ENCODE measurements at regions of chr16 and their contacts with region 1.

Region 1: DNA sequence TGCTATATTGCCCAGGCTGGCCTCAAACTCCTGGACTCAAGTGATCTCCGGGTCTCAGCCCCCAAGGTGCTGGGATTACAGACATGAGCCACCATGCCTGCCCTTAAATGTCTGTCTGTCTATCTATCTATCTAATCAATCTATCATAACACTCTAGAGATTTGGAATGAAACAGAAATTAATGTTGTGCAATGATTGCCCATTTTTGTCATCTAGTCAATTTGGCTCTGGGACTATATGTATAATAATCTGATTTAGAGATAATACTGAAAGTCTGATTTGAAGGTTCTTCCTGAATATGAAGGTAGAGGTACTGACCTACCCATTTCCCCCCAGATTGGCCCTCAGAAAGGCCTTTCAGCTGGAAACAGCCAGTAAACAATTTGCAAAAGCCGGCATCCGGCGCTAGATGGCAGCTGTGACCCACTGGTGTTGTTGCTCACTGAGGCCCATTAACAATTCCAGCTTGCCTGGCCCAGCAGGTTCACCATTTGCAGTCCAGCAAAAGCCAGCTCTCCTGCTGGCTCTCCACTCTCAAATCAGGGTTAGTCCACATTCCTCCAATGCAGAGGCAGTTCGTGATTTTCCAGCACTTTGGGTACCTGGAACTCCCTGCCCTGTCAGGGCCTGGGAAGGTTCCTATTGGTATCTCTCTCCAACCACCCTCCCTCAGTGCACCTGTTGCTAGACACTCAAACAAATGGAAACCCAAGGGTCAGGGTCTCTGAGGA is 22.9 kb upstream of the C16orf87 start:
- DNase-seq: peak; percentile 62 to 86 (median 78)
- ATAC-seq: peak; percentile 94
- H3K4me3 ChIP-seq: no peak overlapping the region
- H3K27ac ChIP-seq: no peak overlapping the region
- H3K4me1 ChIP-seq: no peaks in the 10 kb centered on the region
- H3K27me3 ChIP-seq: no peaks in the 10 kb centered on the region
- CTCF ChIP-seq: peak; percentile 57 to 77

Region 2: GRCh38 chr16:46721885-46722284 is 132.0 kb before region 1 on chr16:
- intact Hi-C with region 1: no loop called
- DNase-seq: no peak
- ATAC-seq: no peak
- H3K4me3 ChIP-seq: no peak overlapping the region
- H3K27ac ChIP-seq: no peak overlapping the region
- H3K4me1 ChIP-seq: no peaks in the 10 kb centered on the region
- H3K27me3 ChIP-seq: no peaks in the 10 kb centered on the region
- CTCF ChIP-seq: no peak

Region 3: DNA sequence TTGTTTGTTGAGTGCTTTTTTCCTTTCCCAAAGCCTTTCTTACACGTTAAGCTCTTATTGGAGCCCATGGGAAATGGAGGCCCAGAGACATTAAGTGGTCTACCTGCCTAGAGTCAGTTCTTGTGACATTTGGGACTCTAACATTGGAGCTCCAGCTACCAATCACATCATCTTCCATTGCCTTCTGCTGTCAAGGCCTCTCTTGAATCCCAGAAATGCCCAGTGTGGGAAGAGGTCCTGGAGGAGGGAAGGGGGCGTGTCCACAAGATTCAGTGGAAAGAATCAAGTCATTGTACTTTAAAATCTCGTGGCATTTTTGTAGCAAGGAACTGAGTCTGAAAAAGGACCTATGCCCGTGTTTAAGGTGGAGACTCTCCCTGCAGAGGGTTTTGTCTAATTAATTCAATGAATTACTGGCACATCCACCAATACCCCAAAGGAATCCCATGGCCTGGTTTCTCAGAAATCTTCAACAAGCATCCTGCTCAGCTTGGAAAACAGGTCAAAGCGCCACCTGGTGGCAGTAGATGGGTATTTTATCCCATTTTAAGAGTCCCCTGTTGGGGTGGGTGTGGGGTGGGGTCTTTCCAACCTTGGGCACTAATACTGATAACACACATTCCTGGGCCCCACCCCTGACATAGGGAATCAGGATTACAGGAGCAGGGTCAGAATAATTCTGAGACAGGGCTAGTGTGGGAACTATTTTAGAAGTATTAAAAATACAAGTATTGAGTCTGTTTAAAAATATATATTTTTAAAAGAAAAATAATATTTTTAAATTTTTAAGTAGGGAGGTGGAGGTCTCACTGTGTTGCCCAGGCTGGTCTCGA is 54.9 kb after region 1 on chr16:
- intact Hi-C with region 1: loop called (anchors 5 to 10 kb)
- DNase-seq: peak in 1 of 4 donors; percentile 78
- ATAC-seq: peak; percentile 82
- H3K4me3 ChIP-seq: no peak overlapping the region
- H3K27ac ChIP-seq: no peak overlapping the region
- H3K4me1 ChIP-seq: no peaks in the 10 kb centered on the region
- H3K27me3 ChIP-seq: no peaks in the 10 kb centered on the region
- CTCF ChIP-seq: peak; percentile 63 to 79

Region 4: DNA sequence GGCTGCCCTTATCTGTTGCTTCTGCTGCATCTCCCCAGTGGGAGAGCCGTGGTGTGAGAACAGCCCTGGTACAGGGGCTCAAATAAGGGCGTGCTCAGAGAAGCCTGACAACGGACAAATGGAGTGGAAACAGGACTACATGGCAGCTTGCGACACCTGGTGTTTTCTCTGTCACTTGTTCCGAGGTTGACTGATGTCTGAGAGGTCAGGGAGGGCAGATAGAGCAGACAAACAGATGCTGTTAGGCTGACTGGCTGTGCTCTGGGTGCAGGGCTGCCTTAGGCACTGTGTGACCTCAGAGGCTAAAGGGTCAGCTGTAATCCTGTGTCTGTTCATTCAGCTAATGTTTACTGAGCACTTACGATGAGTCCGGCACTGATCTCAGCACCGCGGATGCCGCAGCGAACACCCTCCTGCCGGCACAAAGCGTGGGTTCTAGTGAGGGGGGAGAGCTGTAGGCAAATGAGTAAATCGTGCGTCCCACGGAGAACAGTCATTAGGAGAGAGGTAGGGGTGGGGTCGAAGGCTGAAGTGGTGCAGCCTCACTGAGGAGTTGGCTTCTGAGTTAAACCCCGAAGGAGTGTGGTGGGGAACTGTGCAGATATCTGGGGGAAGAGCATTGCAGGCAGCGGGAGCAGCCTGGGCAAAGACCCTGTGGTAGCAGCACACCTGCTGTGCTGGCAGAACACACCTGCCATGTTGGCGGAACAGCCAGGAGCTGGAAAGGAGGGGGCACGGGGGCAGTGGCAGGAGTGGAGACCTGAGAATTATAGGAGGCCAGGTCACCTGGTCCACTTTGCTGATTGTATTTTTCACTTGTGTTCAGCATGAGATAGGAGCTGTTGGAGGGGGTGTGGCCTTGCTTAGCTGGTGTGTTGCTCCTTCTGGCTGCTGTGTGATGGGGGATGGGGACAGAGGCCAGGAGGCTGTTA is 65.2 kb after region 1 on chr16:
- intact Hi-C with region 1: loop called in 1 of 2 experiments (anchors 10 kb)
- DNase-seq: no peak
- ATAC-seq: no peak
- H3K4me3 ChIP-seq: no peak overlapping the region
- H3K27ac ChIP-seq: no peak overlapping the region
- H3K4me1 ChIP-seq: no peaks in the 10 kb centered on the region
- H3K27me3 ChIP-seq: no peaks in the 10 kb centered on the region
- CTCF ChIP-seq: no peak

Measured in left lung (tissue), 14 donors.